ENCODE measurements at regions of chr6 and their contacts with region 1.

Region 1: DNA sequence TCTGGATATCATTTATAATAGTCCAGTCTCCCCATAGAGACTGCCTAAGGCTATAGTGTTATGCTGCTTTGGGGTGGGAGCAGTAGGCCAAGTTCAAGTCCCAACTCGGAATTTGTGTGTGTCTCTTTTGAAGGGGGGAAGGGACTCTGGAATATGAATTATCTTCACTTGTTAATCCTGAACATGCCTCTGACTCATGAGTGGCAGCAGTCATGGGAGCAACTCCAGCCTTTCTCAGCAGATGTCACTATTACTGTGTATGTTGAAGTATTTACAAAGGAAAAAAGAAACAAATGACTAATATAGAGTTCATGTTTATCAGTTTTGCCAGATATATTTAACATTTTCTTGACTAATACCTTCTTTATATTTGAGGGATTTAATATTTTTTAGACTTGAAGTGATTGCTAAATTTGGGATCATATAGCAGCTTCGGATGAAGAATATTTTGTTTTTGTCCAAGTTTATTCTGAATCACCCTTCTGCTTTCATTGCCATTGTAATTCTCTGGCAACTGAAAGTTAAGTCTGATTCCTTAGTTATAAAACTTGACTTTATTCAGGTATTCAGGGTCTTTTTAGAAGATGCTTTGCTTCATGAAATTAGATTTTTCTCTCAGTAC is 23.4 kb downstream of the FAM217A start:
- DNase-seq: no peak
- ATAC-seq: peak; percentile 83

Region 2: GRCh38 chr6:4210629-4211423 is 155.3 kb after region 1 on chr6:
- intact Hi-C with region 1: loop called (anchors 5 kb)
- DNase-seq: peak; percentile 79
- ATAC-seq: peak; percentile 71

Region 3: DNA sequence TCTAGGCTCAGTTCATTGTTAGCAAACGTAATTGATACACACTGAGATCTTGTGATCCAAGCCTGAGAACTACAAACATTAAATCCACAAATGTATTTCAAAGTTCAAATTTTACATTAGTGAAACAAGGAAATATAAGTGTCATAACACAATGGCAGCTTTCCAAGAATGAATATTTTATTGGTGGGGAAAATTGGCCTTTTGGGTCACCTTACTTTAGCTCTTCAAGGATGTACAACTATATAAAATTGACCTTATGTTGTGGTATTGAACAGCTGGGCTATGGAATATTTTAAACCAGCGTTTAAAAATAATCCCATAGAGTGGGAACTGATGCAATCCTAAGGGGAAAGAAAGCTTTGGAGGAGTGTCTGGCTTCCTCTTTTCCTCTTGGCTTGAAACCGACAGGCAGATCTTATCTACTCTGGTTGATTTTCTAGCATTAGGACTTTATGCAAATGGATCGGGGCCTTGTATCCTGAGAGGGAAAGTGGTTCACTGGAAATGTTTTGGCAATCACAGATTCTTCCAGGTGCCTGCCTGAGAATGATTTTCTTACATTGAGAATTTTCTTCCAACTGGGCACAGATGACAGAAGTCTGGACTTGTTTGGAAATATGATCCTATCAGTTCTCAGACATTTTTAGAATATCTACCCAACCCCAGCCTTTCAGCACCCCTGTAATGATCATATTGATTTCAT is 264.6 kb after region 1 on chr6:
- intact Hi-C with region 1: no loop called
- DNase-seq: no peak
- ATAC-seq: peak; percentile 48

Measured in Right ventricle myocardium superior (tissue), 1 donor.